ENCODE measurements at regions of chr6 and their contacts with region 1.

Region 1: DNA sequence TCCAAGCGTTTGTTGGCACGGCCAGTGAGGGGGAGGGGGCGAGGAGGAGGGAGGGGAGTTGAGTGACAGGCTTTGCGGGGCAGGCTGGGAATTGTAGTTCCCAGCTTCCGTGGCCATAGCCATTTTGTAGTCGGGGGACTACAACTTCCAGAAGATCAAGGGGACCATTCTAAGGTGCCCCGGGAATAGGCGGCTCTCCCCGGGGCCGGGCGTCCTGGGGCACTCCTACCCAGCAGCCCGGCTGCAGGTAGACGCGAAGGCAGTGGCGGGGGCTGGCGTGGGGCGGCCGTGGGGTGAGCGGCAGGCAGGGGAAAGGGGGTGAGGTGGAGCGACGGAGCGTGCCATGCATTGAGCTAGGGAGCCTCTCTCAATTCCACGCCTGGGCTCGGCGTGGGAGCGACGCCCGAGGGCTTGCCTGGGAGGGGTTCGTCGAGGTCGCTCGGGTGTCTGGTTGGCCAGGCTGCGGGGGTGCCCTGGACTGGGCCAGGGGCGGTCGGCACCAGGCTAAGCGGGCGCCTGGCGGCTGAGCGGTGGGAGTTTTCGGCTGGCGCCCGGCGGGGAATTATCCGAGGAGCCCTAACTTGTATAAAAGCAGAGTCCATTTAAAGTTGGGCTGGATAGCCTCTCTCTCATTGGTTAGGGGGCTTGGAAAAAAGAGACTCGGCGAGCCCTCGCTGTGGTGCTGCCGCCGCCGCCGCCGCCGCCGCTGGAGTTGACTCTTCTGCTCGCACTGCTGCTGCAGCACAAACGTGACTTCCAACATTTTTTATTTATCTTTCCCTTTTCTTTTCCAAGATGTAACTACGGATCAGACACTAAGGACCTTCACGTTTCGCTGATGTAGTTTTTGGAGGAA is at the start of gene JARID2:
- DNase-seq: peak; percentile 99
- ATAC-seq: peak; percentile 60
- H3K4me3 Mint-ChIP-seq: peak within 1 kb of the TSS; percentile 92
- H3K27ac Mint-ChIP-seq: peak within 1 kb of the TSS; percentile 99
- H3K4me1 Mint-ChIP-seq: peaks cover 22% of the 10 kb centered on the region
- H3K27me3 Mint-ChIP-seq: no peaks in the 10 kb centered on the region
- total RNA-seq, gene JARID2: 43.0 to 48.6 TPM

Region 2: DNA sequence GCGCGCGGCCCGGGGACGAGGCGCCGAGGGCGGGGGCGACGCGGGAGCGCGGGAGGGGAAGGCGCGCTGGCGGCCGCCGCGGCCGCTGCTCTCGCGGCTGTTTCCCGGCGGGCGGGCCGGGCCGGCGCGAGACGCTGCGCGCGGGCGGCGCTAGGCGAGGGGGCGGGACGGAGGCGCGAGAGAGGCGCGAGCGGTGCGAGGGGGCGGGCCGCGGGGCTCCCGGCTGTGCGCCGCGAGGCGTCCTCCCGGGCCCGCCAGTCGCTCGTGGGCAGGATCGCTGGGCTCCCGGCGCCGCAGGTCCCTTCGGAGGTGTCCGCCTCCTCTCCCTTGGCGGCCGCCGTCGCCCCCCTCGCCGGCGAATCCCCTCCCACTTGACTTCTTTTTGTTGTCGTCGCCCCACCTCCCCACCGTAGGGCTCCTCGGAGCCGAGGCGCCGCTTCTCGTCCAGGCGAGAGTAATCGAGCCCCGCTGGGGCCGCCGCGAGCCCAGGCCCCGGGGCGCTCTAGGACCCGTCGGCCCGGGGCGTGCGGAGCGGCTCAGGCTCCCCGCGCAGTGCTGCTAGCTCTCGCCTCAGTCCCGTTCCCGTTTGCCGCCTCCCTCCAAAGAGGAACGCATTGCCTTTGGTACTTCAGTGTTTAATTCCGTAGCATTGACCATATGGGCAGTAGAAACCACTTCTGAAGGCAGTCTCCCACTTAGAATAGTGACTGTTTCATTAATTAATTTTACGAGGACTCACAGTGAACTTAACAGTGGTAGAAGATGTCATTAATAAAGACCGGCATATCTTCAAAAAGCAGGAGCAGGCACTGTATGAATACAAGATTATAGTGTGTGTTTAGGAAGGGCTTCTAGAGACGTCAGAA is 1533.6 kb before region 1 on chr6 and contains the start of gene RANBP9:
- CTCF ChIA-PET with region 1: no interaction called
- POLR2A ChIA-PET with region 1: no interaction called
- intact Hi-C with region 1: loop called in 1 of 2 experiments (anchors 2 kb)
- DNase-seq: peak; percentile 92
- ATAC-seq: peak; percentile 78
- H3K4me3 Mint-ChIP-seq: peak within 1 kb of the TSS; percentile 85
- H3K27ac Mint-ChIP-seq: peak within 1 kb of the TSS; percentile 96
- H3K4me1 Mint-ChIP-seq: peaks cover 49% of the 10 kb centered on the region
- H3K27me3 Mint-ChIP-seq: no peaks in the 10 kb centered on the region
- total RNA-seq, gene RANBP9: 50.8 to 65.0 TPM

Region 3: DNA sequence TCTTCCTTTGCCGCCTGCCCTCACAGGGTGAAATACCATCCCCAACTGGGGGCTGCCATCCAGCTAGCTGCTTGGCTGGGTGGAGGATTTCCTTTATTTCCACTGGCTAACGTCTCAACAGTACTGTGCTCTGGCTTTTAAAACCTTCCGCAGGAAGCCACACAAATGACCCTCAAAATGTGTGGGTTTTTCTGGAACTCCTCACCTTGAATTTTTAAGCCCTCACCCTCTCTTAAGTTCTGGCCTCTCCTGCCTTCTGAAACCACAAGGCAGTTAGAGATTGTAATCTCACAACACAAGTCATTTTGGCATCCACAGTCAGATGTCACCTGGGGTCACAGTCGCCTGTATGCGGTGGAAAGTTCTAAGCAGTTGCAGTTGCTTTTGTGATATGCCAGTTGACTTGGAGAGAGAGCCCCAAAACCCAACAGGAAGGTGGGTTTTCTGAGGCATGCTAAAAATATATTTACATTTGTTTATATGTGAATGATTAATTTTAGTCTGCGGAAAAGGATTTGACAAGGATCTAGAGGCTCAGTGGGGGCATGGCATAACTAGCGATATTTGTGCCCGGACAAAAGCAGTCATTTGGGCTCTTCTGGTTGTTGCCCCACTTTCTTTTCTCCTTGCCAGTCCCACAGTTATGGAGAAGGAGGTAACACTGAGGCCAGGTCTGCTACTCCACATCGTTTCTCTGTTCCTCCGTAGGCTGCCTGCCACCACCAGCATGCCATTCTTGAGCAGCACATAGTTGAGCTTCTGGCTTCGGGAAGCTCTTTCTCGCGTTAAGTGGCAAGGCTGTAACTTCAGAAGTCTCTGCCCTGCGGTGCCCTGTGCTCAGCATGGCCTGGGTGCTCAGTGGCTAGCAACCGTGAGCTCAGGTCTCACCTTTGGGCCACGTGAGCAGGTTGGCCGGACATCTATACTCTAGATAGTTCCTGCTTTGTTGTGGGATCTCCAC is 792.7 kb before region 1 on chr6:
- CTCF ChIA-PET with region 1: no interaction called
- POLR2A ChIA-PET with region 1: no interaction called
- intact Hi-C with region 1: loop called (anchors 2 to 10 kb)
- DNase-seq: peak; percentile 85
- ATAC-seq: peak; percentile 70
- H3K4me3 Mint-ChIP-seq: peak overlapping the region; percentile 26
- H3K27ac Mint-ChIP-seq: peak overlapping the region; percentile 83
- H3K4me1 Mint-ChIP-seq: peaks cover 89% of the 10 kb centered on the region
- H3K27me3 Mint-ChIP-seq: no peaks in the 10 kb centered on the region

Region 4: GRCh38 chr6:14743465-14744211 is 502.0 kb before region 1 on chr6:
- CTCF ChIA-PET with region 1: no interaction called
- POLR2A ChIA-PET with region 1: no interaction called
- intact Hi-C with region 1: loop called in 1 of 2 experiments (anchors 2 kb)
- DNase-seq: peak; percentile 92
- ATAC-seq: peak; percentile 84
- H3K4me3 Mint-ChIP-seq: peak overlapping the region; percentile 65
- H3K27ac Mint-ChIP-seq: peak overlapping the region; percentile 100
- H3K4me1 Mint-ChIP-seq: peaks cover 92% of the 10 kb centered on the region
- H3K27me3 Mint-ChIP-seq: no peaks in the 10 kb centered on the region

Region 5: DNA sequence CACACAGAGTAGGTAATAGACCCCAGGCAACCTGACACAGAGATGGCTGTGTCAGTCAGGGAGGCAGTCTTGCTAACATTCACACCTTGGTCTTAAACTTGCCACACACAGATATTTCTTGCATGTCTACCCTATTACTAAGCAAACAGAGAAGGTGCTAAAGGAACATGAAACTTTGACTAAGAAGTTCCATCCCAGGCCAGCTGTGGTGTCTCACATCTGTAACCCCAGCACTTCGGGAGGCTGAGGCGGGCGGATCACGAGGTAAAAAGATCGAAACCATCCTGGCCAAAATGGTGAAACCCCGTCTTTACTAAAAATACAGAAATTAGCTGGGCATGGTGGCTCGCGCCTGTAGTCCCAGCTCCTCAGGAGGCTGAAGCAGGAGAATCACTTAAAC is 222.1 kb before region 1 on chr6:
- CTCF ChIA-PET with region 1: no interaction called
- POLR2A ChIA-PET with region 1: no interaction called
- intact Hi-C with region 1: loop called in 1 of 2 experiments (anchors 1 kb)
- DNase-seq: peak; percentile 85
- ATAC-seq: peak; percentile 98
- H3K4me3 Mint-ChIP-seq: peak overlapping the region; percentile 37
- H3K27ac Mint-ChIP-seq: peak overlapping the region; percentile 89
- H3K4me1 Mint-ChIP-seq: peaks cover 22% of the 10 kb centered on the region
- H3K27me3 Mint-ChIP-seq: no peaks in the 10 kb centered on the region

Region 6: DNA sequence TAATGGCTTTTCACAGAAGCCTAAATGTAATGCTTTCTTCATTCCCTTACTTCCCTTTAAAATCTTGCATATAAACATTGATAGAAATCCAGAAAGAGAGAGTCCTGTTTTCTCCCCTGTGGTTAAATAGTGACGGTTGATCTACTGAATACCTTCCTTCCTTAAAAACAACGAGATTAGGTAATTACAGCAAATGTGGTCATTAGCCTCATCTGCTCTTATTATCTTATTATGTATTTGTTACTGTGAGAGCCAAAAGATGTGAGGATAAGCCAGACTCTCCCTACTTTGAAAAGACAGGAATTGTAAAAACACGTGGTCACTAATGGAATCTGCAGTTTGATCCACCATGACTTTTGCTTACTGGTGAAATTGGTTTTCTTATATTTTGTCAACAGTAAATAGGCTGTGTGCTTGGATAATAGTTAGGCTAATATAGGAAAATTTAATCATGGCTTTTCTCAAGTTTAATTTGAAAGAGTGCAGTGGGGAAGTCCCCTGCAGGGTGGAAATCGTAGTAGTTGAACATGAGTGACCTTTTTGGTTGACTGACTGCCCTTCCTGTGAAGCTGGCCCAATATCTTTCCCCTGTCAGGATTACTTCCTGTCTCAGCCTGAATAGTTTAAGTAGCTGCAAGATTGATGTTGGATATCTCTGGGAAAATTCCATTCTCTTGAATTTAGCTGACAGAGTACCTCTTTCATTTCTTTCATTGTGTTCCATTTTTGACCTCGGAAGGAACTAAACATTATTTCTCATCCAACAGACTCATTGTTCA is 63.0 kb after region 1 on chr6:
- CTCF ChIA-PET with region 1: no interaction called
- POLR2A ChIA-PET with region 1: no interaction called
- intact Hi-C with region 1: no loop called
- DNase-seq: no peak
- ATAC-seq: no peak
- H3K4me3 Mint-ChIP-seq: peak overlapping the region; percentile 28
- H3K27ac Mint-ChIP-seq: peak overlapping the region; percentile 84
- H3K4me1 Mint-ChIP-seq: peaks cover 86% of the 10 kb centered on the region
- H3K27me3 Mint-ChIP-seq: no peaks in the 10 kb centered on the region

Region 7: DNA sequence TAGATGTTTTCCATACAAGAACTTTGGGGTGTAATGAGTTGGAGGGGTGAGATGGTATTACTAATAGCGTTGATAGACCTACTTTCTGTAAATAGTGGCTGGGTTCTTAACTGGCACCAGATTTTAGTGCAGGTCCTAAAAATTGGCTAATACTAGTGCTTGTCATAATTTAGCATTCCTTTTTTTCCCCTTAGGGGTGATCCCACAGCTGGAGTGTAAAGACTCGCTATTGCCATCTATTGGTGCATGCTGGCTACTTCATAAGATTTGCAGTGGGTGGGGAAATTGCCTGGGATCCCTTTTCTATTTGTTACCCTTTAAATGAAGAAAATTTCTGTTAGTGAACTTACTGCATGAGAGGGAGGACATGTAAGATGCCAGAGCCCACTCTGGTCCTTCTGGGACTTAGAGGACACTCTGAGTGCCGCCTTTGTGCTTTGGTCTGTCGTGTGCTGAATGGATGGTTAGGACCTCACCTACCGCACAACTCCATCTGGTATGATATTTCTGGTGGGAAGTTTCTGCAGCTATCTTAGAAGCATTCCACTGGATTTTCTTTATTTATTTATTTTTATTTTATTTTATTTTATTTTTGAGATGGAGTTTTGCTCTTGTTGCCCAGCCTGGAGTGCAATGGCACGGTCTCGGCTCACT is 195.8 kb after region 1 on chr6:
- CTCF ChIA-PET with region 1: interaction called, 3 read pairs
- POLR2A ChIA-PET with region 1: no interaction called
- intact Hi-C with region 1: loop called in 1 of 2 experiments (anchors 5 kb)
- DNase-seq: peak; percentile 49
- ATAC-seq: no peak
- H3K4me3 Mint-ChIP-seq: no peak overlapping the region
- H3K27ac Mint-ChIP-seq: no peak overlapping the region
- H3K4me1 Mint-ChIP-seq: peaks cover 73% of the 10 kb centered on the region
- H3K27me3 Mint-ChIP-seq: no peaks in the 10 kb centered on the region

Region 8: DNA sequence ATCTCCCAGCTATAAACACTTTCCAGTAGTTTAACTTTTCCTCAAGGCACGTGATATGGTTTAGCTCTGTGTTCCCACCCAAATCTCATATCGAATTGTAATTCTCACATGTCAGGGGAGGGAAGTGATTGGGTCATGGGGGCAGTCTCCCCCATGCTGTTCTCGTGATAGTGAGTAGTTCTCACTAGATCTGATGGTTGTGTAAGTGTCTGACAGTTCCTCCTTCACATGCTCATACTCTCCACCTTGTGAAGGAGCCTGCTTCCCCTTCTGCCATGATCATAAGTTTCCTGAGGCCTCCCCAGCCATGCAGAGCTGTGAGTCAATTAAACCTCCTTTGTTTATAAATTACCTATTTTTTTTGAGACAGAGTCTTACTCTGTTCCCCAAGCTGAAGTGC is 289.4 kb after region 1 on chr6:
- CTCF ChIA-PET with region 1: no interaction called
- POLR2A ChIA-PET with region 1: no interaction called
- intact Hi-C with region 1: no loop called
- DNase-seq: no peak
- ATAC-seq: no peak
- H3K4me3 Mint-ChIP-seq: no peak overlapping the region
- H3K27ac Mint-ChIP-seq: no peak overlapping the region
- H3K4me1 Mint-ChIP-seq: peaks cover 10% of the 10 kb centered on the region
- H3K27me3 Mint-ChIP-seq: no peaks in the 10 kb centered on the region

Region 9: GRCh38 chr6:16128759-16129622 is 883.4 kb after region 1 on chr6 and contains the start of gene MYLIP:
- CTCF ChIA-PET with region 1: no interaction called
- POLR2A ChIA-PET with region 1: no interaction called
- intact Hi-C with region 1: loop called in 1 of 2 experiments (anchors 2 kb)
- DNase-seq: peak; percentile 98
- ATAC-seq: peak; percentile 82
- H3K4me3 Mint-ChIP-seq: peak within 1 kb of the TSS; percentile 90
- H3K27ac Mint-ChIP-seq: peak within 1 kb of the TSS; percentile 86
- H3K4me1 Mint-ChIP-seq: peaks cover 24% of the 10 kb centered on the region
- H3K27me3 Mint-ChIP-seq: no peaks in the 10 kb centered on the region
- total RNA-seq, gene MYLIP: 9.2 to 10.6 TPM